ENCODE measurements at regions of chr11 and their contacts with region 1.

Region 1: GRCh38 chr11:65134386-65135253 is at the start of gene SYVN1:
- DNase-seq: peak; percentile 90
- H3K4me3 Mint-ChIP-seq: peak within 1 kb of the TSS; percentile 96
- H3K27ac Mint-ChIP-seq: peak within 1 kb of the TSS; percentile 99
- H3K4me1 Mint-ChIP-seq: peaks cover 26% of the 10 kb centered on the region
- H3K27me3 Mint-ChIP-seq: no peaks in the 10 kb centered on the region
- total RNA-seq, gene SYVN1: 40.1 and 42.2 TPM in 2 replicates

Region 2: GRCh38 chr11:65027213-65028067 is 107.2 kb before region 1 on chr11 and contains the start of gene SNX15:
- intact Hi-C with region 1: loop called (anchors 1 kb)
- DNase-seq: peak; percentile 88
- H3K4me3 Mint-ChIP-seq: peak within 1 kb of the TSS; percentile 76
- H3K27ac Mint-ChIP-seq: peak within 1 kb of the TSS; percentile 87
- H3K4me1 Mint-ChIP-seq: peaks cover 15% of the 10 kb centered on the region
- H3K27me3 Mint-ChIP-seq: peaks cover 2% of the 10 kb centered on the region
- total RNA-seq, gene SNX15: 19.6 and 22.4 TPM in 2 replicates

Region 3: DNA sequence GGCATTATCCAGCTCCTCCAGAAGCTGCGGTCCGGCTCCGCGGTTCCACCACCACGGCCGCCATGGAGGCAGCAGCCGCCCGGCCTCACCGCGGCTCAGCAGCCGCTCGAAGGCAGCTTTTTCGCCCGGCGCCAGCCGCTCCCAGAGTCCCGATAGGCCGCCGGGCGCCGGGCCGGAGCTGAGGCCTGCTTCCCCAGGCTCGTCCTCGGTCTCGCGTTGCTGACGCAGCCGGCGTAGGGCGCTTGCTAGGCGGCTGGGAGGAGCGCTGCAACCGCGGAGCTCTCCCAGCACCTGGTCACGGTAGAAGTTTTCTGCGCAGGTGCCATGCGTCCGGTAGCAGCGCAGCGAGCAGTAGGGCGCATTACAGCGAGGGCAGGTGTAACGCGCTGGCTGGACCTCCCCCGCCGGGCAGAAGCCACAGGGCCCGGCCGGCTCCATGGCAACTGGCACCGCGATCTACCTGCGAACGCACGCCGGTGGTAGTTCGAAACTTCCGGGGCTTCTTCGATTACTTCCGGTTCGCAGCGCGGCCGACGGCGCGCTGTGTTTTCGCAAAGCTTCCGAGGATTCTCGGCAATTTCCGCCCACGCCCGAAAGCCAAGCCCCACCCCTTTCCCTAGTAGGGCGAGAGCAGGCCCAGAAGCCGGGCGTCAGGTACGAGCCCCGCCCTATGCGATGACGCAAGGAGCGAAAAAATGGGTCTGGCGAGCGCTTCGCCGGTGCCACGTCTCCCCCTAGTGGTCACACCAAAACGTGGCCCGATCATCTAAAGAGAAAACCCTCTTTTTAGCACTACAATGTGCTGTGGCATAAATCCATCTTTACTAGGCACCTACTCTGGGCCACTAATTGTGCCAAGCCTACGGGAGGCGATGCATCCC is 17.2 kb before region 1 on chr11 and contains the start of gene ZNHIT2:
- intact Hi-C with region 1: loop called (anchors 1 kb)
- DNase-seq: peak; percentile 100
- H3K4me3 Mint-ChIP-seq: peak within 1 kb of the TSS; percentile 84
- H3K27ac Mint-ChIP-seq: peak within 1 kb of the TSS; percentile 88
- H3K4me1 Mint-ChIP-seq: peaks cover 28% of the 10 kb centered on the region
- H3K27me3 Mint-ChIP-seq: no peaks in the 10 kb centered on the region
- total RNA-seq, gene ZNHIT2: 11.3 and 12.8 TPM in 2 replicates

Region 4: GRCh38 chr11:65180877-65181568 is 46.4 kb after region 1 on chr11:
- intact Hi-C with region 1: loop called (anchors 2 kb)
- DNase-seq: peak; percentile 61
- H3K4me3 Mint-ChIP-seq: peak overlapping the region; percentile 86
- H3K27ac Mint-ChIP-seq: peak overlapping the region; percentile 76
- H3K4me1 Mint-ChIP-seq: peaks cover 12% of the 10 kb centered on the region
- H3K27me3 Mint-ChIP-seq: peaks cover 2% of the 10 kb centered on the region

Region 5: DNA sequence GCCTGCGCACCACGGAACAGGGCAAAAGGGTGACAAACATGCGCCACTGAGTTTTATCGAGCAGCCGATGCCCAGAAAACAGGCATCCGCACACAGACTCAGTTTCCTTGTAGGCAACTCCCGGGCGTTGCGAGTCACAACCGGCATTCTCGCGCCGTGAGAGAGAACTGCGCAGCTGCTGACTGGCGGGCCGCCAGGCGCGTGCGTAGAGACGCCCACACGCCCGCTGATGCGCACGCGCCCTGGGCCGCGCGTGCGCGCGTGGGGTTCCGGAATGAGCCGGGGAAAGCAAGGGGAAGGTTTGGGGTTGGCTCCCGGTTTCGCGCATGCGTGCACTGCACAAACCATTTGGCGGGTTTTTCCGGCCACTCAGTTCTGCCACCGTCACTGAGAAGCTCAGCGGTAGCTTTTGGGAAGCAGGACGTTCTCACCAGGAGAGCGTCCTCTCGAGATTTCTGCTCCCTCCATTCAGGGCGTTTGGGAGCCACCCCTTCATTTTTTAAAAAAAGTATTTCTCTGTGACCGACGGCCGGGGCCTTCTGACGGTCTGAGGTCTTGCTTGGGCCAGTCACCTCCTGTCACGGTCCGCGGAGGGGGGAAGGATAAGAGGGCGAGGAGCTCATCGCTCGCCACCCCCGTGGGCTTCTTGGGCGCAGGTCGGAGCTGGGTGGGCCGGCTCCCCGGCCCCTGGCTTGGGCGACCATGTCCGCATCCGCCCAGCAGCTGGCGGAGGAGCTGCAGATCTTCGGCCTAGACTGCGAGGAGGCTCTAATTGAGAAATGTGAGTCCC is 127.2 kb after region 1 on chr11 and contains the start of gene POLA2:
- intact Hi-C with region 1: loop called (anchors 5 kb)
- DNase-seq: peak; percentile 97
- H3K4me3 Mint-ChIP-seq: peak within 1 kb of the TSS; percentile 87
- H3K27ac Mint-ChIP-seq: peak within 1 kb of the TSS; percentile 81
- H3K4me1 Mint-ChIP-seq: peaks cover 35% of the 10 kb centered on the region
- H3K27me3 Mint-ChIP-seq: no peaks in the 10 kb centered on the region
- total RNA-seq, gene POLA2: 74.5 and 74.6 TPM in 2 replicates